Dorsolateral prefrontal cortex (tissue), 120 donors: ENCODE measurements at regions of chr20 and their contacts with region 1.

Region 1: DNA sequence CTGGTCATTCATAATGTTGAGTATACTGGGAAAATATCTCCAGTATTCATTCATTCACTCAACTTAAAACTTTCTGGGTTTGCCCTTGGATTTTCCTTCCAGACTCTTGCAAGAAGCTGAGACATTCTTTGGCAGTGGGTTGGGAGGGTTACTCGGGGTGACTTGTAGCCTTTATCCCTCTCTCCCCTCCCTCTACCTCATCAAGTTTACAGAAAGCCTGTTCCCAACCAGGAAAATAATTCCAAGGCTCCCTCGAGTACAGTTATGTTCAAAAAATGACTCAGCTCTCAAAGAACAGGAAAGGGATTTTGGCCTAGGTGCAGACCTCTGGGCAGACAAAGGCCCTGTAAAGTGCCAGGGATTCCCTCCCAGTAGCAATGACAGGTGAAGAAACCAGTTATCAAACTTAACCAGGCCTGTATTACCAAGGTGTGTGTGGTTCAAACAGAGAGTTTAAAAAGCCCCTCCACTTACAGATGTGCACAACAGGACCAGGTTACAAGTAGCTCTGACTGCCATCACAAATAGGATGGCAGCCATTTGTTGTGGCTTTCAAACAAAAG is 22.2 kb downstream of the FKBP1A start:
- DNase-seq: no peak
- H3K4me3 ChIP-seq: no peak overlapping the region
- H3K27ac ChIP-seq: peak overlapping the region in 37 of 59 donors; percentile 0 to 72 (median 35)
- H3K27me3 ChIP-seq: no peaks in the 10 kb centered on the region
- CTCF ChIP-seq: no peak

Region 2: DNA sequence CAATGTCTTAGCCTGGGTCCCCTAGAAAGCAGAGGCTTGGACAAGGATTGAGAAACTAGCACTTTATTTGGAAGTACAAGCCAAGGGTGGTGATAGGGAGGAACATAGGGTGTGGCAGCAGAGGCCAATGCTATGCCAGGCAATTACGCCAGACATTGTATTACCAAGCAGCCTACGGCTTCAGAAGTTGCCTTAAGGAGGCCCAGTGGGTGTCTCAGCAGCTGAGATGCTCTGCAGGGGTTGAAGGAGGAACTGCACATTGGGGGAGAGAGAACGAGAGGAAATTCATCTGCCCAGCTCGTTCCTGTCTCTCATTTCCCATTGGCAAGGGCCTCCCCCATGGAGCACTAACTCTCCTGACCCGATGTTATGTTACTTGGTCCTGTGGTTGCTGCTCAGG is 166.5 kb before region 1 on chr20:
- intact Hi-C with region 1: no loop called
- DNase-seq: no peak
- H3K4me3 ChIP-seq: no peak overlapping the region
- H3K27ac ChIP-seq: no peak overlapping the region
- H3K27me3 ChIP-seq: no peaks in the 10 kb centered on the region
- CTCF ChIP-seq: no peak

Region 3: DNA sequence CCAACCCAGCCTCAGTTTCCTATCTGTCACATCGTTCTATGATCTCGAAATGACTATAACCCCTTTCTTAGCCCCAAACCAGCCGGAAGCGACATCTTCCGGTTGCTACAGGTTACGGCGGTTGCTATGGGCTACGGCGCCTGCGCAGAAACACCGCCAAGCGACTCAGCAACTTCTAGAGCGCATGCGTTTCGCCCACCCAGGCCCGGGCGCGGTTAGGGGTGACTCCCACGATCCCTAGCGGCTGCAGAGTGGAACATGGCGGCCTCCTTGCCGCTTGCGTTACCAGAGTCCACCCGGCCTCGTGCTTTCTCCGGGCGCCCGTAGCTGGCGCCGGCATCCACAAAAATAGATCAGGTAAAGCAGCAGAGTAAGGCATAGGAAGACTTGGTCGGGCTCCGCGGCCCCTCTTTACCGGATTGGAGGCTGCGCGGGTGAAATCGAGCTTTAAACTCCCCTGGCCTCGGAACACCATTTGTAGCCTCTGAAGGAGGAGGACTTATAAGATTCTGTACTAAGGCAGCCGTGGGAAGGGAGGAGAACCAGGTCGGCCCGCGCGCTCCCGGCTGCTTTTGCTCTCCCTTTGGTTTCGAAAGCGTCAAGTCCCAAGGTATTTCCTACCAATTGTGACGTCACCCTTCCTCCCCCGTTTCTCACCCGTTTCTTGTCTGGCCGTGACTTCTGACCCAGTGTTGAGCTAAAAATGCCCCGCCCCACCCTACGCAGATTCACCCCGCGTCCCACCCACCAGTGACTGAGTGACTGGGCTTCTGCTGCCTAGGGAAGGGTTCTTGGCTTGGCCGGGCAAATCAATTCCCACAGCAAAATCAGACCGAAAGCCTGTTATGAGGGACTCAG is 45.2 kb before region 1 on chr20:
- intact Hi-C with region 1: loop called in 1 of 2 experiments (anchors 5 kb)
- DNase-seq: peak; percentile 92 to 96 (median 95)
- H3K4me3 ChIP-seq: peak overlapping the region; percentile 62 to 100 (median 93)
- H3K27ac ChIP-seq: peak overlapping the region; percentile 66 to 100 (median 97)
- H3K27me3 ChIP-seq: no peaks in the 10 kb centered on the region
- CTCF ChIP-seq: peak in 55 of 56 donors; percentile 14 to 76 (median 59)

Region 4: DNA sequence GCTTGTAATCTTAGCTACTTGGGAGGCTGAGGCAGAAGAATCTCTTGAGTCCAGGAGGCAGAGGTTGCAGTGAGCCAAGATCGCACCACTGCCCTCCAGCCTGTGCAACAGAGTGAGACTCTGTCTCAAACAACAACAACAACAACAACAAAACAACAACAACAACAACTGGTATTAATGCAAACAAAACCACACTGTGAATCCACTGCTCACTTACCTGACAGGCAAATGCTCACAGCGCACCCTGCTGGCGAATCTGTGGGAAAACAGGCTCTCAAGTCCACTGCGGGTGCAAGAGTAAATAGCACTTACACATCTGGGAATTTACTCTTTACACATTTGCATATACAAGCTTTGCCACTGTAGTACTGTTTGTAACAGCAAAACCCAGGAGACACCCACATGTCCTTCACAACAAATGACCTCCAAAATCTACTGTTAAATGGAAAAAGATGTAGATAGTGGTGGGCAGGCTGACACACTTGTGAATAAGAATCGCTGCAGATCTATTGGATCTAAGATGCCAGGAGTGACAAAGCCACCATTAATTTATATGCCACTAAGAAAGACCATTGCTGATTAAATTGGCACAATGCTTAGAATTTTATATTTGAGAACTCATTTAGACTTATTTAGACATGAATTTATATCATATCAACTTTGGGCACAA is 66.7 kb after region 1 on chr20:
- intact Hi-C with region 1: loop called in 1 of 2 experiments (anchors 5 kb)
- DNase-seq: peak; percentile 57 to 85 (median 78)
- H3K4me3 ChIP-seq: no peak overlapping the region
- H3K27ac ChIP-seq: no peak overlapping the region
- H3K27me3 ChIP-seq: no peaks in the 10 kb centered on the region
- CTCF ChIP-seq: peak; percentile 63 to 92 (median 85)